ENCODE measurements at regions of chr4 and their contacts with region 1.

Region 1: DNA sequence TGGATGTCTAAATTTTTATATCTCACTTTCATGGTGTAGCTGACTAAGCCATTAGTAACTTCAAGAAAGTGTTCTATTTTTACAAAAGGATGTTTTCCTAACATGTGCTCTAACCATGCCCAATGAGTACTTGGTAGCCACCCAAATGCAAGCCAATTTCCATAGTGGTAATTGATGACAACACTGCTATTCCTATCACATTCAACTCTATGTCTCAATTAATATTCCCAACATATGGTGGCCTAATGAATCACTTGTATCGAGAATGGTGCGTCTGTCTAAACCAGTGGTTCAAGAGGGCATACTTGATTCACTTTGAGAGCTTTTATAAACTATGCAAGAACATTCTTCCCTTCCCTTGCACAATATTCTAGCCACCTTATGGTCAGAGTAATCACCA is 112.9 kb upstream of the GPRIN3 start:
- DNase-seq: no peak
- H3K4me3 ChIP-seq: no peak overlapping the region
- H3K4me1 ChIP-seq: peaks cover 15% of the 10 kb centered on the region
- H3K27me3 ChIP-seq: no peaks in the 10 kb centered on the region

Region 2: DNA sequence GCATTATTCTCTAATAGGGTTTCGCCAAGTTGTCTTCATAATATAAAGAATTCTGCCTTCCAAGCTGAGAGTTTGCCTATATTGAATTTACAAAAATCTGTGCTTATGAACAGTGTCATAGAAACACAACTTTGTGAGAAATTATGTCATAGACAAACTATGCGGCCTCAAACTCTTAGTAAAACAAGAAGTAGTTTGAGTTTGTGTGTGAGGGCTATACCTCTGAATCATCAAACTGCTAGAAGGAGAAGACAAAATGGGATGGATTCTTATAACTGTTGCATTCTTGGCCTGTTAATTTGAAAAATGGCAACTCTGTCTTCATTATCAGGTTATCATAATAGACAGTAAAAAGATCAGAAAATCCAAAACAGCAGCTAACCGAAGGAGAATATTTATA is 676.8 kb before region 1 on chr4:
- in situ Hi-C with region 1: no loop called
- DNase-seq: no peak
- H3K4me3 ChIP-seq: no peak overlapping the region
- H3K4me1 ChIP-seq: no peaks in the 10 kb centered on the region; the same call in 1 of the 2 replicates
- H3K27me3 ChIP-seq: no peaks in the 10 kb centered on the region

Region 3: DNA sequence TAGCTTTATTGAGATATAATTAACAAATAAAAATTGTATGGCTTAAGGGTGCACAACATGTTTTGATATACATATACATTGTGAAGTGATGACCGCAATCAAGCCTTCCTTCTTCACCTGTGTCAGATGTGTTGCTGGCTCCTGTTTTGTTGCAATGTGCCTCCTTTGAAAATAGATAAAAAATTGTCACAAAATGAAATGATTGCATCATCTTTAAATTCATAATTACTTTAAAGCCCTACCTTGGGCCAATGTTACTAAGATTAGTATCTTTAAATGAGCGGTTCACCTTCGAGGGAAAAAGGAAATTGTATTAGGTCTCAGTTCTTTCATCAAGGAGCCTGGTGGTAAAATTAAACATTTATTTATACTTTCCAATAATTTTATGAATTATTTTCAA is 190.2 kb before region 1 on chr4:
- in situ Hi-C with region 1: loop called (anchors 5 kb)
- DNase-seq: no peak
- H3K4me3 ChIP-seq: no peak overlapping the region
- H3K4me1 ChIP-seq: peaks cover 3% of the 10 kb centered on the region; the same call in 1 of the 2 replicates
- H3K27me3 ChIP-seq: no peaks in the 10 kb centered on the region

Region 4: DNA sequence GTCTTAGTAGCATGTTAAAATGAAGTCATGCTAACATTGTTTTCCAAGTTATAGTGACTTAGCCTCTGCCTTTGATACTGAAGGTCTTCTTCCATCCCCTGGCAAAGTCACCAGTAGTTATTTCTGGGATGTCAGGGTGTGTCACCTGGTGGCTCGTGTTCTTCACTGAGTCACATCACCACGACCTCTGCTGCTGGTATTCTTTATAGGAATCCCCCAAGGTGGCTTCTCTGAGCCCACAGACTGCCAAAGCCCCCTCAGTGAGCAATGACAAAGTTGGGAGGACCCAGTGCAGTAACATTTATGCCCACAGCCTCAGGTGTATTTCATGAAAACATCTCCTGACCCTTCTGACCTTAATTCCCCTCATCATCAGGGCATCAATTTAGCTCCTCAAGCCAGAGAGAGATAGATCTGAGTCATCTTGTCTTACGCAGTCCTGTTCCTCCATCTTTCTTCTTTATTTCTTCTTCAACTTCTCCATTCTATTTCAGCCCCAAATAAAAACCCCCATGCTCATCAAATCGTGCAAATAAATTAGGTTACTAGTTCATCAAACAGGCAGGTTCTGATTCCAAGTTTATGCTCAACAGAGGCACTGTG is 83.6 kb before region 1 on chr4:
- in situ Hi-C with region 1: no loop called
- DNase-seq: no peak
- H3K4me3 ChIP-seq: no peak overlapping the region
- H3K4me1 ChIP-seq: no peaks in the 10 kb centered on the region; the same call in 1 of the 2 replicates
- H3K27me3 ChIP-seq: peaks cover 9% of the 10 kb centered on the region

Region 5: GRCh38 chr4:90449626-90450025 is 1029.1 kb after region 1 on chr4:
- in situ Hi-C with region 1: no loop called
- DNase-seq: no peak
- H3K4me3 ChIP-seq: no peak overlapping the region
- H3K4me1 ChIP-seq: no peaks in the 10 kb centered on the region
- H3K27me3 ChIP-seq: no peaks in the 10 kb centered on the region

Measured in HAP-1 (cell line).